GM12878 (cell line): ENCODE measurements at regions of chr3 and their contacts with region 1.

Region 1: DNA sequence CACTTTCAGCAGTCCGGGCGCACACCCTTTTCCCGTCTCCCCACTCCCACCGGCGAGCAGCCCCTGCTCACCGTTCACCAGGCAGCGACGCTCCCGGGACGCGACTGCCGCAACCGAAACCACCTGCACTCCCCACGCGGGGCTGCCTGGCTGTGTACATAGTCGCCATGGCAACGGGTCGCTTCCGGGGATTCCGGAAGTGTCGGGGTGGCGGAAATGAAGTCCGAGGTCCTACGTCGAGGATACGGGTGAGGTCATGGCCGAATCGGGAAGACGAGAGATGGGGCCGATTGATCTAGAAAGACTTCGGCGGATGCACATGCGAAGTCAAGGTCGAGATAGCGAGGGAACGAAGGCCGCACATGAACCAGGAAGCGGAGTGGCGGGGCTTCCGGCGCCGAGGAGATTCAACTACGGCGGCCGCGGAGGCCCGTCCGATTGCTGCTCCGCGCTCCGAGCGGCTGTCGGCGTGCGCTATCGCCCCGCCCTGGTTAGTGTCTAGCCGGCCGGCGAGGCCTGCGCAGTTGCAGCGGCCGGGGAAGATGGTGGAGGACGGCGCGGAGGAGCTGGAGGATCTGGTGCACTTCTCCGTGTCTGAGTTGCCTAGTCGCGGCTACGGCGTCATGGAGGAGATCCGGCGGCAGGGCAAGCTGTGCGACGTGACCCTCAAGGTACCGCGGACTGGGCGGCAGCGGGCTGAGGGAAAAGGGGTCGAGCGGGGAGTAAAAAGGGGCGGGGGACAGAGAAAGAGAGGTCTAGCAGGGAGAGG is at the starts of genes KIF9 and KLHL18:
- DNase-seq: peak; percentile 89
- ATAC-seq: peak; percentile 90
- H3K4me3 ChIP-seq: peak within 1 kb of the TSS; percentile 95
- H3K27ac ChIP-seq: peak within 1 kb of the TSS; percentile 92
- H3K4me1 ChIP-seq: peaks cover 12% of the 10 kb centered on the region
- H3K27me3 ChIP-seq: no peaks in the 10 kb centered on the region
- CTCF ChIP-seq: peak in 1 of 3 experiments; percentile 9; a peak in 1 of 6 replicates
- EP300 ChIP-seq: no peak; a peak in 1 of 4 replicates
- POLR2A ChIP-seq: peak; percentile 96
- RAD21 ChIP-seq: no peak
- polyA plus RNA-seq, gene KIF9: 7.6 to 8.0 TPM
- polyA plus RNA-seq, gene KLHL18: 65.6 to 69.8 TPM

Region 2: GRCh38 chr3:47225310-47225906 is 57.2 kb before region 1 on chr3:
- CTCF ChIA-PET with region 1: no interaction called
- POLR2A ChIA-PET with region 1: interaction called, 3 read pairs
- RAD21 ChIA-PET with region 1: interaction called, 3 read pairs
- SMC1A ChIA-PET with region 1: interaction called, 4 read pairs
- in situ Hi-C with region 1: no loop called
- intact Hi-C with region 1: loop called (anchors 1 kb)
- DNase-seq: peak; percentile 77
- ATAC-seq: peak; percentile 85
- H3K4me3 ChIP-seq: no peak overlapping the region; the same call in 1 of the 2 replicates
- H3K27ac ChIP-seq: peak overlapping the region; percentile 32; the same call in 1 of the 2 replicates
- H3K4me1 ChIP-seq: peaks cover 46% of the 10 kb centered on the region
- H3K27me3 ChIP-seq: no peaks in the 10 kb centered on the region
- CTCF ChIP-seq: no peak
- EP300 ChIP-seq: peak in 1 of 2 experiments; percentile 95; a peak in 2 of 4 replicates
- POLR2A ChIP-seq: no peak
- RAD21 ChIP-seq: no peak

Region 3: GRCh38 chr3:47296562-47297302 is 14.1 kb after region 1 on chr3:
- CTCF ChIA-PET with region 1: interaction called, 11 read pairs
- POLR2A ChIA-PET with region 1: interaction called, 15 read pairs
- RAD21 ChIA-PET with region 1: interaction called, 14 read pairs
- SMC1A ChIA-PET with region 1: interaction called, 30 read pairs
- in situ Hi-C with region 1: no loop called
- intact Hi-C with region 1: no loop called
- DNase-seq: no peak
- ATAC-seq: peak; percentile 61
- H3K4me3 ChIP-seq: no peak overlapping the region
- H3K27ac ChIP-seq: peak overlapping the region; percentile 17; the same call in 1 of the 2 replicates
- H3K4me1 ChIP-seq: peaks cover 34% of the 10 kb centered on the region
- H3K27me3 ChIP-seq: no peaks in the 10 kb centered on the region
- CTCF ChIP-seq: no peak
- EP300 ChIP-seq: no peak
- POLR2A ChIP-seq: no peak
- RAD21 ChIP-seq: no peak

Region 4: GRCh38 chr3:47315069-47315647 is 32.5 kb after region 1 on chr3:
- CTCF ChIA-PET with region 1: interaction called, 5 read pairs
- POLR2A ChIA-PET with region 1: interaction called, 4 read pairs
- RAD21 ChIA-PET with region 1: interaction called, 11 read pairs
- SMC1A ChIA-PET with region 1: interaction called, 7 read pairs
- in situ Hi-C with region 1: no loop called
- intact Hi-C with region 1: no loop called
- DNase-seq: no peak
- ATAC-seq: no peak
- H3K4me3 ChIP-seq: no peak overlapping the region
- H3K27ac ChIP-seq: no peak overlapping the region
- H3K4me1 ChIP-seq: peaks cover 8% of the 10 kb centered on the region; the same call in 1 of the 2 replicates
- H3K27me3 ChIP-seq: no peaks in the 10 kb centered on the region
- CTCF ChIP-seq: no peak
- EP300 ChIP-seq: no peak
- POLR2A ChIP-seq: no peak
- RAD21 ChIP-seq: no peak

Region 5: GRCh38 chr3:47370887-47371697 is 88.5 kb after region 1 on chr3:
- CTCF ChIA-PET with region 1: no interaction called
- POLR2A ChIA-PET with region 1: no interaction called
- RAD21 ChIA-PET with region 1: no interaction called
- SMC1A ChIA-PET with region 1: no interaction called
- in situ Hi-C with region 1: no loop called
- intact Hi-C with region 1: loop called (anchors 10 kb)
- DNase-seq: no peak
- ATAC-seq: peak; percentile 87
- H3K4me3 ChIP-seq: no peak overlapping the region
- H3K27ac ChIP-seq: no peak overlapping the region
- H3K4me1 ChIP-seq: no peaks in the 10 kb centered on the region
- H3K27me3 ChIP-seq: no peaks in the 10 kb centered on the region
- CTCF ChIP-seq: peak; percentile 34 to 52 (median 43); a peak in 4 of 6 replicates
- EP300 ChIP-seq: no peak
- POLR2A ChIP-seq: no peak
- RAD21 ChIP-seq: peak; percentile 54